ENCODE measurements at regions of chr2 and their contacts with region 1.

Region 1: GRCh38 chr2:166127217-166128155 is at the start of gene SCN1A:
- DNase-seq: no peak
- ATAC-seq: no peak
- H3K4me3 ChIP-seq: no peak within 1 kb of the TSS
- H3K27ac ChIP-seq: no peak within 1 kb of the TSS
- H3K4me1 ChIP-seq: peaks cover 0 to 3% (median 0%) of the 10 kb centered on the region in 12 donors
- H3K27me3 ChIP-seq: peaks cover 0 to 23% (median 0%) of the 10 kb centered on the region in 9 donors
- CTCF ChIP-seq: peak; percentile 38 to 73 (median 64)
- POLR2A ChIP-seq: no peak
- total RNA-seq, gene SCN1A: 0.05 to 1.3 (median 0.35) TPM in 7 of 9 donors, not detected in the others

Region 2: GRCh38 chr2:164992818-164993217 is 1134.7 kb before region 1 on chr2:
- intact Hi-C with region 1: loop called in 1 of 10 experiments (anchors 10 kb)
- DNase-seq: peak in 2 of 5 donors; percentile 55 to 60
- ATAC-seq: peak in 3 of 4 donors; percentile 54 to 74 (median 66)
- H3K4me3 ChIP-seq: no peak overlapping the region
- H3K27ac ChIP-seq: no peak overlapping the region
- H3K4me1 ChIP-seq: peaks cover 0 to 18% (median 7%) of the 10 kb centered on the region in 12 donors
- H3K27me3 ChIP-seq: no peaks in the 10 kb centered on the region
- CTCF ChIP-seq: peak; percentile 40 to 77 (median 60)
- POLR2A ChIP-seq: no peak

Region 3: DNA sequence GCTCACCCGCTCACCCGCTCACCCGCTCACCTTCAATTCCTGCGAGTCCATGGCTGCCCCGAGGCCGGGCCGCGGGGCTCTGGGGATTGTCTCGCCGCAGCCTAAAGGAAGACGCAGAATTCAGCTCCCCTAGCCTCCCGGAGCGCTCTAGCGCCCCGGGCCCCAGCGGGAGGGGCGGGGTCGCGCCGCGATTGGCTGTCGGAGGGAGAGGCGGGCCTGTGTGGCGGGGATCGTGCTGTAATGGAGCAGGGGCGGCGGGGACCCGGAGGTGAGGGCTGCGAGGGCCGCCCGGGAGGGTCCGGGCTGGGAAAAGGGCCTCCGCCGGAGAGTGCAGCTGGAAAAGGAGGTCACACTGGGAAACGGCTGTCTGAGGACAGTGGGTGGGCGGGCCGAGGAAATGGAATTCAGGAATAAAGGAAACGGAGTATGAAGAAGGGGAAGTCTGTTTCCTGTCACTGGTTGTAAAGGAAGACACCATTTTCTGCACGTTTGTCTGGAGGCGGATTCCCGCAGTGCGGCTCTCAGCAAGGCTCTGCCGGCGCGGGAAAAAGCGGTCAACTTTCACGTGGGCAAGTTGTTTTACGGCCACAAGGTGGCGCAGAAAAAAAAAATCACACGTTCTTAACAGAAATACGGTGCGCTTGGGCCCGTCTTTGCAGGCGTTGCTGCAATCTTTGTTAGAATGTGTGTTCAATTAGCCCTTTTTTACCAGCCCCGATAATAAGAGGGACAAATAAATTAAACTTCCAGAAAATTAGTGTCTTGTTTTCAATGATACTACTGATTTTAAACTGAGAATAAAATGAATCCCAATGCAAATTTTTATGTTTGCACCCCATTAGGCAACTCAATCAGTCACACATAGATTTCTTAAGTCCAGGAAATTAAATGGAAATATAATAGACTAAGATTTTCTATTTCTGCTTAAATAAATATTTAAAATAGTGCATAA is 173.6 kb before region 1 on chr2 and contains the start of gene TTC21B:
- intact Hi-C with region 1: loop called (anchors 2 to 10 kb)
- DNase-seq: peak; percentile 96 to 97 (median 97)
- ATAC-seq: peak; percentile 100
- H3K4me3 ChIP-seq: peak within 1 kb of the TSS; percentile 54 to 91 (median 80)
- H3K27ac ChIP-seq: peak within 1 kb of the TSS; percentile 23 to 91 (median 84)
- H3K4me1 ChIP-seq: peaks cover 0 to 37% (median 20%) of the 10 kb centered on the region in 12 donors
- H3K27me3 ChIP-seq: no peaks in the 10 kb centered on the region
- CTCF ChIP-seq: peak; percentile 78 to 88 (median 84)
- POLR2A ChIP-seq: peak; percentile 21 to 64
- total RNA-seq, gene TTC21B: 8.8 to 16.1 (median 13.6) TPM

Region 4: GRCh38 chr2:166057370-166058164 is 69.9 kb before region 1 on chr2:
- intact Hi-C with region 1: loop called in 7 of 10 experiments (anchors 2 to 5 kb)
- DNase-seq: no peak
- ATAC-seq: no peak
- H3K4me3 ChIP-seq: no peak overlapping the region
- H3K27ac ChIP-seq: no peak overlapping the region
- H3K4me1 ChIP-seq: no peaks in the 10 kb centered on the region
- H3K27me3 ChIP-seq: no peaks in the 10 kb centered on the region
- CTCF ChIP-seq: peak; percentile 18 to 61 (median 47)
- POLR2A ChIP-seq: no peak